Colonic mucosa (tissue), 4 donors: ENCODE measurements at regions of chr3 and their contacts with region 1.

Region 1: GRCh38 chr3:10224784-10225665 is 23.2 kb upstream of the TATDN2 start:
- DNase-seq: peak; percentile 86
- H3K4me3 ChIP-seq: no peak overlapping the region
- H3K27ac ChIP-seq: no peak overlapping the region
- H3K4me1 ChIP-seq: no peaks in the 10 kb centered on the region
- H3K27me3 ChIP-seq: no peaks in the 10 kb centered on the region
- CTCF ChIP-seq: peak; percentile 84

Region 2: GRCh38 chr3:10115326-10116137 is 109.5 kb before region 1 on chr3 and contains the start of gene BRK1:
- intact Hi-C with region 1: loop called (anchors 10 kb)
- DNase-seq: peak; percentile 95
- H3K4me3 ChIP-seq: peak within 1 kb of the TSS; percentile 83
- H3K27ac ChIP-seq: peak within 1 kb of the TSS; percentile 70
- H3K4me1 ChIP-seq: peaks cover 10% of the 10 kb centered on the region
- H3K27me3 ChIP-seq: no peaks in the 10 kb centered on the region
- CTCF ChIP-seq: no peak
- total RNA-seq, gene BRK1: 104 to 105 TPM

Region 3: DNA sequence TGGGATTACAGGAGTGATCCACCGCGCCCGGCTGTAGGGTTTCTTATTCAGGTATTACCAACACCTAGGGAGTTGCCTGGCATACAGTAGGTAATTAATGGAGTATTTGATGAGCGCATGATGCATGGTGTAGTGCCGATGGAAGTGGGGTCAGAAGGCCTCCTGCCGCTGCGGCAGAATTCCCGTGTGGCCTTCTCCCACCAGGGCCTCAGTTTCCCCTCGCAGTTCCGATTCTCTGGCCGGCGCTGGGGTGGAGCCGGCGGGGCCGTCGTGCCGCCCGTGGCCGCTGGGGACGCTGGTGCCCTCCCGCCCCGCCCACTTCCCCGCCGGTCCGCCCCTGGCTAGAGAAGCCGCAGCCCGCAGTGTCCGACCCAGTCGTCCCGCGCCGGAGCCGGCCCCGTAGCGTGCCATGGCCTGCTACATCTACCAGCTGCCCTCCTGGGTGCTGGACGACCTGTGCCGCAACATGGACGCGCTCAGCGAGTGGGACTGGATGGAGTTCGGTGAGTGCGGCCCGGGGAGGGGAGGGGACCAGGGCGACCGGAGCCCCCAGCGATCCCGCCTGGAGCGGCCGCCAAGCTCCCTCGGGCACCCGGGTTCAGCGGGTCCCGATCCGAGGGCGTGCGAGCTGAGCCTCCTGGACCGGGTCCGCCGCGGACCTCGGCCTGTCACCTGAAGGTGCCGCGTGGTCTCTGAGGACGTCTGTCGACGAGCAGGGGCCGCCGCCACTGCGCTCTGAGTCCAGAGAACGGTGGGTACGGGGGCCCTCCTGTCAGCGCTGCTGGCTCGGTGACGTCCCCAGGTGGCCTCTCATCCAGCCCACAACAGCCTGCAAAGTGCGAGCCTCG is 60.3 kb before region 1 on chr3 and contains the start of gene IRAK2:
- intact Hi-C with region 1: loop called (anchors 5 kb)
- DNase-seq: peak; percentile 77
- H3K4me3 ChIP-seq: peak within 1 kb of the TSS; percentile 80
- H3K27ac ChIP-seq: peak within 1 kb of the TSS; percentile 45
- H3K4me1 ChIP-seq: no peaks in the 10 kb centered on the region
- H3K27me3 ChIP-seq: no peaks in the 10 kb centered on the region
- CTCF ChIP-seq: peak; percentile 98
- total RNA-seq, gene IRAK2: 1.0 to 2.6 TPM

Region 4: GRCh38 chr3:10563396-10563795 is 338.4 kb after region 1 on chr3:
- intact Hi-C with region 1: no loop called
- DNase-seq: no peak
- H3K4me3 ChIP-seq: no peak overlapping the region
- H3K27ac ChIP-seq: no peak overlapping the region
- H3K4me1 ChIP-seq: no peaks in the 10 kb centered on the region
- H3K27me3 ChIP-seq: no peaks in the 10 kb centered on the region
- CTCF ChIP-seq: no peak